ENCODE measurements at regions of chr2 and their contacts with region 1.

Region 1: DNA sequence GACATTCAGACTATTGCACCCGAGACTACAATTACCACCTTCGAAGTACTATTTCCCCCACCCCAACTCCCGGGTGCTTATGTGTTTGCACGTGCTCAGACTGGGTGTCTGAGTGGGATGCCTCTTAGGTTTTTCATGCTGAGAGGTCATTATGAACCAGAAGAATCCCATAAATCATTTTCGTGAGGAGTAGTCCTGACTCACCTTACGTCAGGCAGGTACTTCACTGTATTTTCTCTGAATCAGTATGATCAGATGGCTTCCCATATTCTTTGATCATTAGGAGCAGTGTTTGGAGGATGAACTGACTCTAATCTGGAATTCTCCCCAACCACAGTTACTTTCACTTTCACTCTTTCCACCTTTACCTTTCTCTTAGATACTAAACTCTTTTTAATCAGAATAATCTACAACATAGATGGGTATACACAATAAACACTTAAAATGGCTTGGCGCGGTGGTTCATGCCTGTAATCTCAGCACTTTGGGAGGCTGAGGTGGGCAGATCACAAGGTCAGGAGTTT is 38.4 kb upstream of the STAT4 start:
- DNase-seq: no peak
- H3K4me3 Mint-ChIP-seq: no peak overlapping the region
- H3K27ac Mint-ChIP-seq: no peak overlapping the region
- H3K4me1 Mint-ChIP-seq: peaks cover 56% of the 10 kb centered on the region
- H3K27me3 Mint-ChIP-seq: no peaks in the 10 kb centered on the region

Region 2: DNA sequence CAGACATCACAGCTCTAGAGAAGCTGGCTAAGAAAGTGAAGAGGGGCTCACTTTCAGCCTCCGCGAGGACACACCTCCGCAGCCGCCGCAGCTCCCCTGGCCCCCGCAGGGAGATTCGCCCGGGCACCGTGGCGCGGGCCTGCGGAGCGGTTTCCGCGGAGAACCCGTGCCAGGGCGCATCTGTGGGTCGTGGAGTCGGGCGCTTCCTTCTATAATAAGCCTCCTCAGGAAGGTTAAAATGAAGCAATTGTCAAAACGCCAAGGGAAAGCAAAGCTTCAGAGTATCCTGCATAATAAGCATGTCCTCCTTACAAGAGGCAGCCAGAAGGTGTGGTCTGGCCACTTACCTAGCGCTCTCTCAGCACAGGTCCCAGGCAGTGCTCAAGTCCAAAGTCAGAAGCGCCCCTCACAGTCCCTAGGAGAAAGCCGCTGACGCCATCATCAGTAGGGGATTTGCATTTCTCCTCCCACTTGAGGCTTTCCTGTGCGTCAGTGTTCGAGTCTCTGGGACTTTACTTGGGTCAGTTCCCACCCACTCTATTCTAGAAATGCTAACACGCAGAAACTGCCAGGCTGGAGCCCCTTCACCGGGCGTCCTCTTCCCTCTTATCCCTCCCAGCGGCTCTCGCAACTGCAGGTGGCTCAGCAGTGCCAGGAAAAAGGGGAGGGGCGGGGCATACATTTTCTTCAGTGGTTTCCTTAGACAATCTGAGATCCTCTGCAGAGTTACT is 38.4 kb before region 1 on chr2 and contains the start of gene STAT4:
- intact Hi-C with region 1: loop called (anchors 1 kb)
- DNase-seq: peak; percentile 78
- H3K4me3 Mint-ChIP-seq: peak within 1 kb of the TSS; percentile 95
- H3K27ac Mint-ChIP-seq: peak within 1 kb of the TSS; percentile 95
- H3K4me1 Mint-ChIP-seq: peaks cover 85% of the 10 kb centered on the region
- H3K27me3 Mint-ChIP-seq: no peaks in the 10 kb centered on the region
- total RNA-seq, gene STAT4: 57.4 and 62.1 TPM in 2 replicates

Region 3: DNA sequence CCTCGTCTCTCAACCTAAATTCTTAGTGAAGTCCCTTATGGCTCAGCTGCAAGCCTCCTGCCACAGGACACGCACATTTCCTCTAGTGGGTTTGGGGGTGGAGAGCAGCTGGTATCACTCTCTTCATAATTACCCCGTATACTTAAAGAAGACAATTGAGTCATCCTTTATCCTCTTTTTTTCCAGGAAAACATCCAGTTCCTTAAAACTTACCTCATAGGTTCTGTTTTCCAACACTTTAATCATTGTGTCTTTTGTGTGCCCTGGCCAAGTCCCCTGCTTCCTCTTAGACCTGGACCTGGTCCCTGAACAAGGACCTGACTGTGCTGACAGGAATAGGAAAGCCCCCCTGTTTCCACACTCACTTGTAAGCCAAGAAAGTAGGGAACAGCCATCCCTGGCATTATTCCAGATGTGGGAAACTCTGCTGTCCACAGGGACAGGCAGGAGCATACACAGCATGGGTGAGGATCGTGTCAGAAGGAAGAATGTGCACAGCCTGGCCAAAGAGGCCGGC is 13.8 kb after region 1 on chr2:
- intact Hi-C with region 1: loop called (anchors 1 kb)
- DNase-seq: no peak
- H3K4me3 Mint-ChIP-seq: peak overlapping the region; percentile 68
- H3K27ac Mint-ChIP-seq: peak overlapping the region; percentile 86
- H3K4me1 Mint-ChIP-seq: peaks cover 52% of the 10 kb centered on the region
- H3K27me3 Mint-ChIP-seq: no peaks in the 10 kb centered on the region

Region 4: GRCh38 chr2:191228861-191229260 is 39.7 kb after region 1 on chr2:
- intact Hi-C with region 1: no loop called
- DNase-seq: no peak
- H3K4me3 Mint-ChIP-seq: no peak overlapping the region
- H3K27ac Mint-ChIP-seq: no peak overlapping the region
- H3K4me1 Mint-ChIP-seq: peaks cover 5% of the 10 kb centered on the region
- H3K27me3 Mint-ChIP-seq: peaks cover 5% of the 10 kb centered on the region

Region 5: DNA sequence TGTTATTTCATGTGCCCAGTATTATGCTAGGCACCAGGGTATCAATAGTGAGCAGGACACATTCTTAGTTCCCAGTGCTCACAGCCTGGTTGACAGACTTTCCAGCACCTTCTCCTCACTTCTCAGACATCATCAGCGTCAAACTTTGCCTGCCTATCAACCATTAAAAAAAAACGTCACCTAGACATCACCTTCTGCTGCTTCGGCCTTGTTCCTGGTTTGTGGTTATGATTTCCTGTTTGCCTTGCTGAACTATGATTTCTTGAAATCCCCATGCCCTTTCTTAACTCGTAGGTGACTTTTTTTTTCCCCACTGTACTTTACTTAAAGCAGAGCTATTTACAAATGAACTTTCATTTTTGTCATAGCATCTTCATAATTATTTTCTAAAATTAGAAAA is 428.4 kb after region 1 on chr2:
- intact Hi-C with region 1: loop called (anchors 5 kb)
- DNase-seq: peak; percentile 64
- H3K4me3 Mint-ChIP-seq: peak overlapping the region; percentile 20
- H3K27ac Mint-ChIP-seq: peak overlapping the region; percentile 90
- H3K4me1 Mint-ChIP-seq: peaks cover 53% of the 10 kb centered on the region
- H3K27me3 Mint-ChIP-seq: no peaks in the 10 kb centered on the region

Region 6: DNA sequence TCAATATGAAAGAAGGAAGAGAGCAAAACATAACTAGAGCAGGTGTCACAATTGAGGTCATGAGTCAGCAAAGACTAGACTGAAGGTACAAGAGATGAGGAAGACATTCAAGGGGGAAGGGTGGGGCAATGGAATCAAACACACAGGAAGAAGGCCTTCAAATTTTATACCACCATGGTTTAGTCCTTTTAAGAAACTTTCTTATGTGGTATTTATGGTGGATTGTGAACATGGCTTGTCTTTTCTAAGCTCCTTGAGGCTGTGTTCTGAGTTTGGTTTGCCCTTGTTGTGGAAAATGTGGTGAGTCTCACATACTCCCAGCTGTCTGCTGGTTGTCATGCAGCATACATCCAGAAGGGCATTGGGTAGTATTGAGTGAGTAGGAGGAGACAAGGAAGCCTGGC is 550.8 kb after region 1 on chr2:
- intact Hi-C with region 1: loop called (anchors 5 kb)
- DNase-seq: peak; percentile 64
- H3K4me3 Mint-ChIP-seq: peak overlapping the region; percentile 2
- H3K27ac Mint-ChIP-seq: peak overlapping the region; percentile 45
- H3K4me1 Mint-ChIP-seq: peaks cover 18% of the 10 kb centered on the region
- H3K27me3 Mint-ChIP-seq: peaks cover 25% of the 10 kb centered on the region